Activated B cell treated with CpG ODN at 0.5 μM for 24 hours (primary cell): ENCODE measurements at regions of chr18 and their contacts with region 1.

Region 1: DNA sequence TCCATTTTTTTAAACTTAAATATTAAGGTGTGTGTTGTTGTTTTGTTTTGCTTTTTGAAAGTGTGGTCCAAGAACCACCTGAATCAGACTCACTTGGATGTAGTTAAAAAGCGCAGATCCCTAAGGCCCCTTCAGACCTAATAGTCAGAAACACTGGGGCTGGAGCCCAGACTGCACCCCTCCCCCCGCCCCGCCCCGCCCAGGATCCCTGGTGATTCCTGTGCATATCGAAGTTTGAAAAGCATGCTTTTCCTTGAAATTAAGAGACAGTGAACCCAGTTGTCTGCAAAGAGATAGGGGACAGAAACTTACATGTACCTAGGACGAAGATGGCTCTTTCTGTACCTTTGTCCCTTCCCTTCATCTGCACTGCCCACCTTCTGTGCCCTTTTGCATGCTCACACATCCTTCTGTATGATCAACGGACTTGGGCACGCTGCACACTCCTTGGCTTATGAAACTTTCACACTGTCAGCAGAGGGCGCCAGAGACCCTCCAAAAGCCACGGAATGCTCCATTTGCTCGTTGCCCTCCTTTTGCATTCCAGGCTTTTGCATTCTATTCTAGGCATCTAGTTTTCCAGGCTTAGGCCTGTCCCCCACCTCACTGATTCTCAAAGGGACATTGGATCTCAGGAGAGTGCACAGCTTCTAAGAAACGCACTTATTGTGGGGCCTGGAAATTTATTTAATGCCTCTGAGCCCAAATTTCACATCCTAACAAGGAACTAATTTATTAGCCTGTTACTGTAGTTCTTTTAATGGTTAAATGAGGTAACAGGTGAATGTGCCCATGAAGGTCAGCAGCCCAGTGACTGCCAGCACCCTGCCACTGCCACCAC is 32.8 kb upstream of the SLC14A1 start:
- DNase-seq: peak; percentile 41
- ATAC-seq: no peak
- H3K4me3 Mint-ChIP-seq: no peak overlapping the region
- H3K27ac Mint-ChIP-seq: no peak overlapping the region
- H3K4me1 Mint-ChIP-seq: peaks cover 38% of the 10 kb centered on the region
- H3K27me3 Mint-ChIP-seq: peaks cover 3% of the 10 kb centered on the region
- CTCF ChIP-seq: peak; percentile 52

Region 2: DNA sequence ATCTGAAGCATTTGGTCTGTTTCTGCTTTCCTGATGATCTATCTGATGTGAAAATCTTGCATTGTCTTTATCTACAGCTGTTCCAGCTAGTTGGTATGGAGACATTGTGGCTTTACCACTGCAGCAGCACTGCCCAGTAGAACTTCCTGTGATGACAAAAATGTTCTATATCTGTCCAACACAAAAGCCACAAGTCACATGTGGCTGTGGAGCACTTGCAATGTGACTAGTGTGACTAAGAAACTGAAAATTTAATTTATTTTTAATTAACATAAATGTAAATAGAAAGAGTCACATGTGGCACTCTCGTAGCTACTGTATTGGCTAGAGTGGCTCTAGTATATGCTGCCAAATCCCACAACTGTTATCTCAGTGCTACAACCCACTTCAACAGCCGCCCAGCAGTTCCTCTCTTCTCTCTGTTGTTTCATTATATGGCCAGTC is 584.8 kb before region 1 on chr18:
- CTCF ChIA-PET with region 1: no interaction called
- POLR2A ChIA-PET with region 1: no interaction called
- intact Hi-C with region 1: loop called (anchors 10 kb)
- DNase-seq: peak; percentile 17
- ATAC-seq: peak; percentile 56
- H3K4me3 Mint-ChIP-seq: peak overlapping the region; percentile 21
- H3K27ac Mint-ChIP-seq: no peak overlapping the region
- H3K4me1 Mint-ChIP-seq: peaks cover 2% of the 10 kb centered on the region
- H3K27me3 Mint-ChIP-seq: no peaks in the 10 kb centered on the region
- CTCF ChIP-seq: no peak

Region 3: DNA sequence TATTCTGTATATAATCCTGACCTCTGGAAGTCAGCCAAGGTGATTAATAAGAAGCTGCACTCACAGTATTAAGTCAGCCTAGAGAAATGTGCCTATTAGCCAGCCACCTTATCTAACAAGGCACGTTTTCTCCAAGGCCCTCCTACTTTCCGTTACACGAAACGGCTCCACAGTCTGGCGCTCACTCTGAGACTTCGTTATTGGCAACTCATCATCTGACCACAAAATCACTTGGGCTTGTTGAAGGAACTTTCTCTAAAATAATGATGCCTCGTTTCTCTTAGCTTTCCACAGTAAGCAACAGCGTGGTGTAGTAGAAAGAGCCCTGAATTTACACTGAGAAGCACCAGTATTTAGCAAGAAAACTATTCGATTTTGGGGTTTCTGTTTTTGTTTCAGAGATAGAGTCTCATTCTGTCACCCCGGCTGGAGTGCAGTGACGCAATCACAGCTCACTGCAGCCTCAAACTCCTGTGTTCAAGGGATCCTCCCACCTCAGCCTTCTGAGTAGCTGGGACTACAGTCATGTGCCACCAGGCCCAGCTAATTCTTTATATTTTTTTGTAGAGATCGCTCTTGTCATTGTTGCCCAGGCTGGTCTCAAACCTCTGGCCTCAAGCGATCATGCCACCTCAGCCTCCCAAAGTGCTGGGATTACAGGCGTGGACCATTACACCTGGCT is 20.8 kb before region 1 on chr18:
- CTCF ChIA-PET with region 1: interaction called, 64 read pairs
- POLR2A ChIA-PET with region 1: interaction called, 63 read pairs
- intact Hi-C with region 1: loop called (anchors 1 kb)
- DNase-seq: no peak
- ATAC-seq: peak; percentile 59
- H3K4me3 Mint-ChIP-seq: peak overlapping the region; percentile 39
- H3K27ac Mint-ChIP-seq: peak overlapping the region; percentile 33
- H3K4me1 Mint-ChIP-seq: peaks cover 33% of the 10 kb centered on the region
- H3K27me3 Mint-ChIP-seq: no peaks in the 10 kb centered on the region
- CTCF ChIP-seq: no peak

Region 4: DNA sequence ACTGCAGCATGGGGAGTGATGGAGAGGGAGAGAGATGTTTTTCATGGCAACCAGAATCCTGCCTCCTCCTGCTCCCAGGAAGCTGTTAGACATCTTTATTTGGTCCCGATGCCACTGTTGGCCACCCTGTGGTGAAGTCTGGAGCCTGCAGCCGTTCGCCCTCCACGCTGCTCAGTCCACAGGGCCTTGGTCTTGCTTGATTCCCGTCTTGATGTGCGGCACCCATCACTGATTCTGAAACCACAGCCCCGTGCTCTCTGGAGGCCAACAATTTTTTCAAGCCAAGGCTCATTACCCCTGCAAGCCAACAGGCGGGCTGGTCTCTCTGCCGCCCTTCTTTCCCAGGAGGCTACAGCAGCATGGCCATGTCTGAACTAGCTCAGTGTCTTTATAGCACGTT is 158.8 kb after region 1 on chr18:
- CTCF ChIA-PET with region 1: no interaction called
- POLR2A ChIA-PET with region 1: no interaction called
- intact Hi-C with region 1: loop called (anchors 1 kb)
- DNase-seq: no peak
- ATAC-seq: peak; percentile 86
- H3K4me3 Mint-ChIP-seq: no peak overlapping the region
- H3K27ac Mint-ChIP-seq: peak overlapping the region; percentile 50
- H3K4me1 Mint-ChIP-seq: peaks cover 4% of the 10 kb centered on the region
- H3K27me3 Mint-ChIP-seq: no peaks in the 10 kb centered on the region
- CTCF ChIP-seq: no peak

Region 5: DNA sequence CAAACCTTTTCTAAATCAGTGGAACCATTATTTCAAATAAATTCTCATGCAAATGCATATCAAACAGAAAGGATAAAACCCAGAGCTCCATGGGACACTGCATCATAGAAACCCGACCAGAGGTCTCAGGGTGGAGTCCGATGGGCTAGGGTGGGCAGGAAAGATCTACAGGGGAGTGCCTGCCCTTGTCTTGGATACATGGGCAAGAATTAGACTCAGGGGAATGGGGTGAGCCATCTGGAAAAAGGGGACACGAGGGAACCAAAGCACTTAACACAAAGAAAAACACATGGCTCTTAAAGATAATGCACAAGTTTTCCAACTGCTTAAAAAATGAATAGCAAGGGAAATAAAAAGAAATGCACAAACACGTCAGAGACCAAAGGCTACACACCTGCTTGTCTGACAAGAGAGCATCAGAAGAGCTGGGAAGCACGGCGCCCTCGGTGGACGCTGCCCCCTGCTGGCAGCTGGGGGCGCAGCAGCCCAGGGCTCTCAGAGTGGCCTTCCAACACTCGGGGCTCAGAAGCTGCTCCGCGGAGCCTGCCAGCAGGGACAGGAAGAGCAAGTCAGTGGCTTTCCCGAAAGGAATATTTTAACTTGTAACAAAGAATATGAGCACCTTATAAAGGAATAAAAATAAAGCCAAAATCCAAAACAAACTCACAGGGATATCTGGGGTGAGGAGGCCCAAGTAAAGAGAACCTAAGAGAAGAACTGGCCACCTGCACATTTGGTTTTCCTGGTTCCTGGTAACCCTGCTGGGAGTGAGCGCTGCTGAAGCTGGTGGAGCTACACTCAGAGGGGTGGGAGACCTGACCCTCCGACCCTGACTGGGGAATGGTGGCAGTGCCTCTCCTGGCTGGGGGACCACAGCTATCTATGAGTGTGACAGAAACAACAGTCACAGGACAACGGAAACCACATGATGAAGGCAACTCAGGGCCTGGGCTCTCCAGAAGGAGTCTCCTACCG is 188.8 kb after region 1 on chr18:
- CTCF ChIA-PET with region 1: interaction called, 86 read pairs
- POLR2A ChIA-PET with region 1: interaction called, 8 read pairs
- intact Hi-C with region 1: loop called (anchors 1 kb)
- DNase-seq: peak; percentile 62
- ATAC-seq: peak; percentile 92
- H3K4me3 Mint-ChIP-seq: no peak overlapping the region
- H3K27ac Mint-ChIP-seq: peak overlapping the region; percentile 41
- H3K4me1 Mint-ChIP-seq: peaks cover 11% of the 10 kb centered on the region
- H3K27me3 Mint-ChIP-seq: no peaks in the 10 kb centered on the region
- CTCF ChIP-seq: peak; percentile 93

Region 6: DNA sequence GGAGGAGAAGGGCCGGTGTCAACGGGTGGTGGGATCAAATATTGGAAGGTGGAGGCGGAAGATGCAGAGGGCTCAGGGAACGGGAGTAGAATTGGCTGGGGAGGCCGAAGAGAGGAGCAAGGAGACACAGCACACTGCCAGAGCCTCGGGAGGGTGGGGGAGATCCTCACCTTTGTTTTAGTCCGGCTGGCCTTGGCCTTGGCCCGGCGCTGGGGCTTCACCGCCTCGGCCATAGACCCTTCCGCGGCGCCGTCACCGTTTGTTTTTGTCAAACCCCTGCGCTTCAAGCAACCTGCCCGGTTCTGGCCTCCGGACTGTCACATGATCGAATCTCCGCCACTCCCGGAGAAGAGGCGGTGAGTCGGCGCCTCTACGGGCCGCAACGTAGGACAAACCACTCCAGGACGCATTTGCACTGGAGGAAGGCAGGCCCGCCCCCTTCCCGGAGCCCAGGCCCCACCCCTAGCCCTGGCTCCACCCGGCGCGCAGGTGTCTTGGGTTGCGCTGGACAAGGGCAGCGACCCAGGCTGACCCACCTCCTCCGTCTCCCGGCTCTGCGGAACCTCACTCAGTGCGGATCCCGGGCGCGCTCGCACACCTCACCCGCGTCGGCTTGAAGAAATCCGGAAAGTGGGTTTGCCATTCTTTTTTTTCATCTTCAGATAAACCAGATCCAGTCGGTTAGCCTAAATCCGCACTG is 276.0 kb after region 1 on chr18 and contains the start of gene EPG5:
- CTCF ChIA-PET with region 1: no interaction called
- POLR2A ChIA-PET with region 1: no interaction called
- intact Hi-C with region 1: loop called (anchors 1 kb)
- DNase-seq: peak; percentile 88
- ATAC-seq: peak; percentile 100
- H3K4me3 Mint-ChIP-seq: peak within 1 kb of the TSS; percentile 98
- H3K27ac Mint-ChIP-seq: peak within 1 kb of the TSS; percentile 87
- H3K4me1 Mint-ChIP-seq: peaks cover 42% of the 10 kb centered on the region
- H3K27me3 Mint-ChIP-seq: no peaks in the 10 kb centered on the region
- CTCF ChIP-seq: no peak
- total RNA-seq, gene EPG5: 34.2 and 38.3 TPM in 2 replicates

Region 7: GRCh38 chr18:46073474-46074331 is 382.5 kb after region 1 on chr18:
- CTCF ChIA-PET with region 1: interaction called, 4 read pairs
- POLR2A ChIA-PET with region 1: interaction called, 3 read pairs
- intact Hi-C with region 1: loop called (anchors 1 kb)
- DNase-seq: no peak
- ATAC-seq: peak; percentile 53
- H3K4me3 Mint-ChIP-seq: no peak overlapping the region
- H3K27ac Mint-ChIP-seq: no peak overlapping the region
- H3K4me1 Mint-ChIP-seq: peaks cover 17% of the 10 kb centered on the region
- H3K27me3 Mint-ChIP-seq: peaks cover 10% of the 10 kb centered on the region
- CTCF ChIP-seq: no peak